ENCODE measurements at regions of chr1 and their contacts with region 1.

Region 1: GRCh38 chr1:182614796-182615454 is 10.7 kb upstream of the RGS16 start:
- DNase-seq: peak; percentile 83
- H3K4me3 Mint-ChIP-seq: peak overlapping the region; percentile 70
- H3K27ac Mint-ChIP-seq: peak overlapping the region; percentile 94
- H3K4me1 Mint-ChIP-seq: peaks cover 62% of the 10 kb centered on the region
- H3K27me3 Mint-ChIP-seq: peaks cover 31% of the 10 kb centered on the region

Region 2: GRCh38 chr1:181397845-181398244 is 1217.1 kb before region 1 on chr1:
- intact Hi-C with region 1: loop called (anchors 5 kb)
- DNase-seq: peak; percentile 81
- H3K4me3 Mint-ChIP-seq: peak overlapping the region; percentile 63
- H3K27ac Mint-ChIP-seq: peak overlapping the region; percentile 87
- H3K4me1 Mint-ChIP-seq: peaks cover 39% of the 10 kb centered on the region
- H3K27me3 Mint-ChIP-seq: no peaks in the 10 kb centered on the region

Region 3: GRCh38 chr1:182588500-182589452 is 26.1 kb before region 1 on chr1 and contains the start of gene RNASEL:
- intact Hi-C with region 1: loop called (anchors 2 kb)
- DNase-seq: peak; percentile 85
- H3K4me3 Mint-ChIP-seq: peak within 1 kb of the TSS; percentile 96
- H3K27ac Mint-ChIP-seq: peak within 1 kb of the TSS; percentile 97
- H3K4me1 Mint-ChIP-seq: peaks cover 34% of the 10 kb centered on the region
- H3K27me3 Mint-ChIP-seq: peaks cover 15% of the 10 kb centered on the region
- total RNA-seq, gene RNASEL: 3.4 and 4.8 TPM in 2 replicates

Region 4: GRCh38 chr1:182629499-182630096 is 14.7 kb after region 1 on chr1:
- intact Hi-C with region 1: loop called (anchors 1 kb)
- DNase-seq: peak; percentile 76
- H3K4me3 Mint-ChIP-seq: peak overlapping the region; percentile 47
- H3K27ac Mint-ChIP-seq: peak overlapping the region; percentile 80
- H3K4me1 Mint-ChIP-seq: peaks cover 65% of the 10 kb centered on the region
- H3K27me3 Mint-ChIP-seq: peaks cover 21% of the 10 kb centered on the region

Region 5: DNA sequence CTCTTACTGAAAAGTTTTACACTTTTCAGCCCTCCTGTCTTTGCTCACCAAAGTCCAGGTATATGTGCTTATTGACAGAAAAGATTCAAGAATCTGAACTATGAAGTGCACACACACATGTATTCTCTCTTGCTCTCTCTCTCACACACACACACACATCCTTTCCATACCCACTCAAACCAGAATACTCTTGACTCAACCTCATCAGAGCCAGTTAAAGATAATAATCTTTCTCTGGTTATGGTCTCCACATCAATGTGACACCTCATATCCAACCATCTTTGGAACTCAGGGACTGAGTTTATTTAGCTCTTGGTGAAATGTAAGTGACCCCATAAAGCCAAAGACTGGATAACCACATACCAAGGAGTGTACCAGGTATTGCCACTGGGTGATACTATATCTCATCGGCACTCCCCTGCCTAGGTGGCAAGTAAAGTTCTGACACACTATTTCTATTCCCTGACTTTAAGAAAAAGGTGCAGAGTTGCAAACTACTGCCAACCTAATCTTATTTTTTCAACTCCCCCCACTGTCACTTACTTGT is 94.4 kb after region 1 on chr1:
- intact Hi-C with region 1: loop called (anchors 1 kb)
- DNase-seq: no peak
- H3K4me3 Mint-ChIP-seq: peak overlapping the region; percentile 43
- H3K27ac Mint-ChIP-seq: peak overlapping the region; percentile 74
- H3K4me1 Mint-ChIP-seq: peaks cover 30% of the 10 kb centered on the region
- H3K27me3 Mint-ChIP-seq: no peaks in the 10 kb centered on the region

Region 6: GRCh38 chr1:182789138-182790076 is 174.5 kb after region 1 on chr1 and contains the start of gene NPL:
- intact Hi-C with region 1: loop called (anchors 1 kb)
- DNase-seq: peak; percentile 96
- H3K4me3 Mint-ChIP-seq: peak within 1 kb of the TSS; percentile 89
- H3K27ac Mint-ChIP-seq: peak within 1 kb of the TSS; percentile 83
- H3K4me1 Mint-ChIP-seq: peaks cover 10% of the 10 kb centered on the region
- H3K27me3 Mint-ChIP-seq: peaks cover 18% of the 10 kb centered on the region
- total RNA-seq, gene NPL: 4.4 and 5.5 TPM in 2 replicates

Measured in activated CD4-positive, alpha-beta T cell treated with anti-CD3 and anti-CD28 coated beads, Interleukin-2, amount 10 ng/mL, durations not matched to agents 24 days and 14 days (primary cell).